Ascending aorta (tissue), 2 donors: ENCODE measurements at regions of chr1 and their contacts with region 1.

Region 1: DNA sequence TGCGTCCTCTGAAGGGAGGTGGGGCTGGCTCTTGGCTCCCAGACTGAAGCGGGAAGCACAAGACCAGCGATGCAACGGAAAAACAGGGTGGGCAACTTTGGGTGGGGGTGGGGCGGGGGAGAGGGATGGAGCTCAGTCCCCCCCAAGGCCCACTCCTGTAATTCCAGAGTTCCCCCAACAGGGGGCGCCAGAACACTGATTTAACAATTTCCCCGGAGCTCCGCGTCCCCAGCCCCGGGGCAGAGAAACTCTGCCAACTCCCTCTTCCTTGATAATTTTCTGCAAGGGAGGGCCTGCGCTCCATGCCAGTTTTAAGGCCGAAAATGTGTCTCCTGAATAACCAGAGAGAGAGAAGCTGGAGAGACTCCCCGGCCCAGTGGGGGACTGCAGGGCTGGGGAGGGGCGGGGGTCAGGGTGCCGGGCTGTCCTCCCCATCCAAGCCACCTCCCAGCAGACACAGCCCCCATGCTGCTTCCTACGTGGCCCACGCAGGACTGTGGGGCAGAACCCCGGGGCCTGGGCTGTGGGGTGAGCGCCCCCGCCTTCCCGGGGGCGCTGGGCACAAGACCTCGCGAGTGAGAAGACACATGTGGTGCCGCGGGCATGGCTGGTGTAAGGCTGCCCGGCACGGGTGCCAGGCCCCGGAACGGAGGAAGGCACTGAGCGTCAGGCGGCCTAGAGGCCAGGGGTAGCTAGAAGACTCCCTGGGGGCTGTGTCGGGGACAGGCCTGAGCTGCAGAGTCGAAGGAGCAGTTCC is 51.4 kb downstream of the KIF21B start:
- DNase-seq: peak in 1 of 2 donors; percentile 79
- H3K4me3 ChIP-seq: no peak overlapping the region
- H3K27ac ChIP-seq: no peak overlapping the region
- H3K4me1 ChIP-seq: no peaks in the 10 kb centered on the region
- H3K27me3 ChIP-seq: no peaks in the 10 kb centered on the region
- CTCF ChIP-seq: peak; percentile 62 to 95 (median 93)

Region 2: DNA sequence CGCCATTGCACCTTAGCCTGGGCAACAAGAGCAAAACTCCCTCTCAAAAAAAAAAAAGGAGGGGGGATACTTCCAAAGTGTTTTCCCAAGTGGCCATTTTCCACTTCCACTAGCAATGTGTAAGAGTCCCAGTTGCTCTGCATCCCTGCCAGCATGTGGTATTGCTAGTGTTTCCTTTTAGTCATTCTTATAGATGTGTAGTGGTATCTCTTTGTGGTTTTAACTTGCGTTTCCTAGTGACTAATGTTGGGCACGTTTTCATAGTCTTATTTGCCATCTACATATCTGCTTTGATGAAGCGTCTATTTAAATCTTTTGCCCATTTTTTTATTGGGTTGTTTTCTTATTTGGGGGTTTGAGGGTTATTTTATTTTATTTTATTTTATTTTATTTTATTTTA is 46.3 kb before region 1 on chr1:
- intact Hi-C with region 1: no loop called
- DNase-seq: no peak
- H3K4me3 ChIP-seq: no peak overlapping the region
- H3K27ac ChIP-seq: no peak overlapping the region
- H3K4me1 ChIP-seq: no peaks in the 10 kb centered on the region
- H3K27me3 ChIP-seq: no peaks in the 10 kb centered on the region
- CTCF ChIP-seq: no peak

Region 3: GRCh38 chr1:200951016-200951415 is 21.1 kb before region 1 on chr1:
- intact Hi-C with region 1: no loop called
- DNase-seq: no peak
- H3K4me3 ChIP-seq: no peak overlapping the region
- H3K27ac ChIP-seq: no peak overlapping the region
- H3K4me1 ChIP-seq: no peaks in the 10 kb centered on the region
- H3K27me3 ChIP-seq: no peaks in the 10 kb centered on the region
- CTCF ChIP-seq: no peak

Region 4: GRCh38 chr1:201042779-201043461 is 70.8 kb after region 1 on chr1:
- intact Hi-C with region 1: loop called (anchors 2 kb)
- DNase-seq: peak in 1 of 2 donors; percentile 71
- H3K4me3 ChIP-seq: no peak overlapping the region
- H3K27ac ChIP-seq: no peak overlapping the region
- H3K4me1 ChIP-seq: no peaks in the 10 kb centered on the region
- H3K27me3 ChIP-seq: no peaks in the 10 kb centered on the region
- CTCF ChIP-seq: peak; percentile 63 to 78 (median 77)

Region 5: GRCh38 chr1:201114236-201115131 is 142.4 kb after region 1 on chr1:
- intact Hi-C with region 1: loop called (anchors 1 kb)
- DNase-seq: peak; percentile 37 to 93
- H3K4me3 ChIP-seq: peak overlapping the region; percentile 66 to 74
- H3K27ac ChIP-seq: peak overlapping the region in 1 of 2 donors; percentile 29
- H3K4me1 ChIP-seq: no peaks in the 10 kb centered on the region
- H3K27me3 ChIP-seq: no peaks in the 10 kb centered on the region
- CTCF ChIP-seq: peak; percentile 82 to 88 (median 87)

Region 6: GRCh38 chr1:201222125-201222524 is 250.0 kb after region 1 on chr1:
- intact Hi-C with region 1: loop called (anchors 2 kb)
- DNase-seq: peak in 1 of 2 donors; percentile 16
- H3K4me3 ChIP-seq: no peak overlapping the region
- H3K27ac ChIP-seq: no peak overlapping the region
- H3K4me1 ChIP-seq: no peaks in the 10 kb centered on the region
- H3K27me3 ChIP-seq: no peaks in the 10 kb centered on the region
- CTCF ChIP-seq: no peak